Posterior cingulate gyrus (tissue), 11 donors: ENCODE measurements at regions of chr6 and their contacts with region 1.

Region 1: DNA sequence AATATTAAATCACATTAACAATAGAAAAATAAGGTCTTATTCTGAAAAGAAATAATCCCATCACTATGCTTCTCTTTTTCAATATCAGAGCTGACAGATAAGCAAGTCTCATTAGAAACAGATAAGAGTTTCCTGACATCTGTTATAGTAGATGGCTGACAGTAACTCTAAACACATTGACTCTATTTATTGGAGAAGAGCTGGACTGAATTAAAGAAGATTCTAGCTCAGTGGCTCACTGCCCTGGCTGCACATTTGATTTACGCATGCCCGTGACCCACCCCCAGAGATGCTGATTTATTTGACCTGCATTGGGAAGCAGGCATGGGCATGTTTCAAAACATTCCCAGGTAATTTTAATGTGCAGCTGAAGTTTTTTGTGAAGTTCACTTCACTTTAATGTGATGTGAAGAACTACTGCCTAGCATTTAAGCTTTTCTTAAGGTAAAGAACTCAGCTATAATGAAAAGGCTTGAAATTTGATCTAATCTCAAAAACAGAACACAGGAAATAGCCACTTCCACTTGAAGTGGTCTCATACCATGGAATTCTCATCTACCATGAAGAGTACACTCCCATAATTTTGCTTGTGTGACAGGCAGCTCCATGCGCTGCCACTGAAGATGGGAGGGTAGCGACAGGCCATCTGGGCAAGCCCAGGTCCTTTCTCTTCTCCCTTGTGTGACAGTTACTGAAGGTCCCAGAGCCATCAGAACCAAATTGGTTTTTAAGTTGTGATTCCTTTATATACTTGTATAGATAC is 162.3 kb downstream of the TPBG start:
- DNase-seq: no peak

Region 2: GRCh38 chr6:82040405-82041221 is 485.3 kb before region 1 on chr6:
- intact Hi-C with region 1: no loop called
- DNase-seq: peak in 6 of 10 donors; percentile 16 to 62 (median 35)

Region 3: DNA sequence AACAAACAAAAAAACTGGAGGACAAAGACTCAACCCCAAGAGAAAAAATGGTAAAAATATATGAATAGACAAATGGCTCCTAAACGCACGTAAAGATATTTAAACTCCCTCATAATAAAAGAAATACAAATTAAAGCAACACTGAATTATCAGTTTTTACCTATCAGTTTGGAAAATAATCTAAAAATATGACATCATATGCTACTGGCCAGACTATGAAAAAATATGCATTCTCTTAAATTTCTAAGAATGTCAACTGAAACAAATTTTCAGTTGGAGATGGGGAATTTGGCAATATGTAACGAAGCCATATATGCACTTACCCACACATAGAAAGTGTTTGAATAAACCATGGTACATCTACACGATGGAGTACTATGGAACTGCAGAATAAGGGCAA is 15.3 kb after region 1 on chr6:
- intact Hi-C with region 1: loop called (anchors 1 kb)
- DNase-seq: no peak